Left cardiac atrium (tissue), 4 donors: ENCODE measurements at regions of chr12 and their contacts with region 1.

Region 1: DNA sequence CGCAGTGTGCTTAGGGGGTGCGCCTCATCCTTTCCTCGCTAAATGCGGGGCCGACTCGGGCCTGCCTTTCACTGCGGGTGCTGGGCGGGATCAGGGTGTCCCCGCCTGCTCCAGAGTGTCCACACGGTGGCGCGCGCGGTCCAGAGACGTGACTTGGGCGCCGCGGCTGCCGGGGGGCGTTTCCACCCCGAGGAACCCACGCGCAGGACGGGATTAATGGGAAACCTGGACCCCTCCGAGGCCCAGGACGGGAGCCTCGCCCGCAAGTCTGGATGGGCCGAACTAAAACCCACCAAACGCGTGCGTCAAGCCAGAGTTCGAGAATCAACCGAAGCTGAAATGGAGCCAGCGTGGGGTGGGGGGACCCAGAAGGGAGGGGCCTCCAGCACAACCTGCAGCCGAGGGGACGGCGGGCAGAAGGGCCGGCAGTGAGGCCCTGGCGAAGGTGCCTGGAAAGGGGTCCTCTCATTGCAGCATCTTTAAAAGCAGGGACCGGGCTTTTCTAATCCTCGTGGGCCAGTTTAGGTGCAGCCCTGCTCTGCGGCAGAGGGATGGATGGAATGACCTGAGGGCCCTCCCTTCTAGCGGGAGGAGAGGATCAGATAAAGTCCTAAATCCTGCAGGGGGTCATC is 93.3 kb downstream of the NINJ2 start:
- DNase-seq: peak; percentile 93
- ATAC-seq: peak; percentile 76 to 79

Region 2: DNA sequence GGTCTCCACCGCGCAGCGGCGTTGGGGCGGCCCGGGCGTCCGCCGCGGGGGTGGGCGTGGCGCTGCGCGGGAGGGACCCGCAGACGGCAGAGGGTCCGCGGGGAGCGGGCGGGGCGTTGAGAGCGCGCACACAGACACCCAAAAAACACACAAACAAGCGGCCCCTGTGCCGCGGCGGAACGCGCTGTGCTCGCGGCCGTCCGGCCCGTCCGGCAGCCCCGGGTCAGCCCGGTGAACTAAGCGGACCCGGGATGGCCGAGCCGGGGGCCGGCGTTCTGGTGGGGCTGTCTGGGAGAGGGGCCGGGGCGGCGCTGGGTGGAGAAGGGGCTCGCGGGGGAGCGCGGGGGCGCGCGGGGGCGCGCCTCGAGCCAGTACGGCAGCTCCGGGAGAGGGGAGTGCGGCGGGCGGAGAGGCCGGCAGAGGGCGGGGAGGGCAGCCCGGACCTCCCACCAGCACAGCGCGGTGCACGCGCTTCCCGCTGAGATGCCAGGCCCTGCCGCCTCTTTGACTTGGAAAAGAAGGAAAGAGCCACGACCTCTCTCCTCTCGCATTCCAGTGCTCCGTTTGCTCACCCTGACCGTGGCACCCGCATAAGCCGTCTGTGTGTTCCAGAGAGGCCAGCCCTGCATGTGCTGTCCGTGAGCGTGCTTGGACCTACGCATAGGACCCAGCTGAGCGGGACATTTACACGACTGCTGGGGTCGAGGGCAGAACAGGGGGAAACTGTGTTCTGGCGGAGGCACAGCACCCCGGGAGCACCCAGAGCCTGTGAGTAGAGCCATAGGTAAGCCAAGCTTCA is 366.3 kb before region 1 on chr12:
- intact Hi-C with region 1: no loop called
- DNase-seq: peak; percentile 44
- ATAC-seq: peak; percentile 80

Region 3: GRCh38 chr12:630656-631632 is 61.0 kb after region 1 on chr12:
- intact Hi-C with region 1: loop called in 1 of 2 experiments (anchors 5 kb)
- DNase-seq: peak; percentile 72
- ATAC-seq: peak; percentile 75 to 83

Region 4: GRCh38 chr12:810671-811415 is 240.9 kb after region 1 on chr12:
- intact Hi-C with region 1: loop called (anchors 5 to 10 kb)
- DNase-seq: no peak
- ATAC-seq: no peak

Region 5: GRCh38 chr12:949453-950191 is 379.7 kb after region 1 on chr12 and contains the start of gene RAD52:
- intact Hi-C with region 1: loop called (anchors 10 kb)
- DNase-seq: peak; percentile 98
- ATAC-seq: peak; percentile 97 to 98
- total RNA-seq, gene RAD52: 6.4 to 6.8 TPM

Region 6: DNA sequence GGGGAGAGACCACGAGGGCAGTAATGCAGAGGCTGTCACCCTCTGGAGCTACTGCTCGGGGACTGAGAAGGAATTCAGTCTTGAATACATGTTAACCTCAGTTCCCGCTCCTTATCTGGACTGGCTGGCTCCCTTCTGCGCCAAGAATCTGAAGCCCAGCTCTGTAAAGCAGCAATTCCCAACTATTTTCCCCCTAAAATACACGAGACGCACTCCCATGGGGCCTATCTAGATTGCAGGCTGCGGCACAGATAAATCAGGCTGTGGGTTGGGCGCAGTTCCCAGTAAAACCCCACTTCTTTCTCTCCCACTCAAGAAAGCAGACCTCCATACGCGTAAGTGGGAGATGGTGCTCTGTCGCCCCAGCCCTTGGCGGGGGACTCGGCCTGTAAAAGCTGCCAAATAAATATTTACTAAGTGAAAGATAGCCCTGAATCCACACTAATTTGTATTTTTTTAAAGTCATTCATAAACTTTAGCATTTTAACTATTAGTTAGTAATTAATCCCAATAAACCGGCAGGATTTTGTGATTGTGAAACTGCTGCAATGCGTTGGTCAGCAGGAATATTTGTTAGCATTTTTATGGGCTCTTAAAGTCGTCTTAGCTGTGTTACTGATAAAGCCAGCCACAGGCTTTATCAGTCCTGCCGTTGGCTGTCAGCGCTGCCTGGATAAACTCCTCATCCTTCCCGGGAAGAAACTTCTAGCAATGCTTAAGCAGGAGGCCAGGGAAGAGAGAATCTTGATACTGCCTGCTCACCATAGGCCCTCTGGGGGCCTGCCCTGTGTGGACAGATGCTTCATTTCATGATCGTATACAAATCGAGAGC is 1006.7 kb after region 1 on chr12:
- intact Hi-C with region 1: loop called in 1 of 2 experiments (anchors 10 kb)
- DNase-seq: peak; percentile 59
- ATAC-seq: peak; percentile 74 to 79